Left lung (tissue), 14 donors: ENCODE measurements at regions of chr15 and their contacts with region 1.

Region 1: GRCh38 chr15:65275728-65276126 is 11.0 kb downstream of the PARP16 start:
- DNase-seq: no peak
- ATAC-seq: no peak
- H3K4me3 ChIP-seq: no peak overlapping the region
- H3K27ac ChIP-seq: no peak overlapping the region
- H3K4me1 ChIP-seq: no peaks in the 10 kb centered on the region
- H3K27me3 ChIP-seq: no peaks in the 10 kb centered on the region
- CTCF ChIP-seq: no peak

Region 2: DNA sequence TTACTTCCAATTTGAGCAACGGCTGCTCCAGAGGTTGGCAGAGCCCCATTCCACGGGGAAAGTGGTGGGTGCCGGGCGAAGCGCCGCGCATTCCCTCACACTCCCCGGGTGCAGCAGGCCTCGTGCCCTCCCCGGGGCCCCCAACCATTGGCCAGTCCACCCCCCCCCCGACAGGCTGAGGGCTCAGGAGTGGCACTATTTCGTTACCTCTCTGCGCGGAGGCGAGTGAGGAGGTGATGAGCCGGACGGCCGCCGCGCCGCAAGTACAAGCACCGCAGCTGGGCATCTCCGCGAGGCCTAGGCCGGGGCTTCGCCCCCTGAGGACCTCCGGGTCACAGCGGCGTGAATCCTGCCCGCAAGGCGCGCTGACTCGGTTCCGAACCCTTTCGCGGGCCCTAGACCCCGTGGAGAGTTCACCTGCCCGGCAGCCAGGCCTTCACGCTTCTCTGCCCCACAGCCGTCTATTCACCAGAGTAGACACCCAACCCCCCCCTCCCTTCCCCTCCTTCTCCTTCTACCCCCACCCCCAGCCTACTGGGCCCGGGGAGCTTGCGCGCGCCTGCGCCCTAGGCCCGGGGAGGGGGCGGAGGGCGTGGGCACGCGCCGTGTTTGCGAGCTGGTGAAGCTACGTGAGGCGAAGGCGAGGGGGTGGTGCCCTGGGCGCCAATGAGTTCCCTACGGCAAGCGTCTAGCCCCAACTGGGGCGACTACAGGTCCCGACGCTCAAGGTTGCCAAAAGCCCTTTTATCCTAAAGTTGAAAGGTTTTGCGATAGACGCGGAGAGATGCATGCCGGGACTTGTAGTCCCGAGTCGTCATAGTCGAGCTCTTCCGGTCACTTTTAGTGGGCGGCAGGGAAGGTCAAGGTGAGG is 90.6 kb before region 1 on chr15 and contains the start of gene CLPX:
- intact Hi-C with region 1: loop called in 1 of 2 experiments (anchors 5 kb)
- DNase-seq: peak; percentile 93 to 97 (median 96)
- ATAC-seq: peak; percentile 92
- H3K4me3 ChIP-seq: peak within 1 kb of the TSS; percentile 87 to 97
- H3K27ac ChIP-seq: peak within 1 kb of the TSS; percentile 91 to 95
- H3K4me1 ChIP-seq: peaks cover 21 to 40% of the 10 kb centered on the region in 2 donors
- H3K27me3 ChIP-seq: no peaks in the 10 kb centered on the region
- CTCF ChIP-seq: no peak
- polyA plus RNA-seq, gene CLPX: 62.4 to 80.5 (median 65.5) TPM